ENCODE measurements at regions of chrX and their contacts with region 1.

Region 1: DNA sequence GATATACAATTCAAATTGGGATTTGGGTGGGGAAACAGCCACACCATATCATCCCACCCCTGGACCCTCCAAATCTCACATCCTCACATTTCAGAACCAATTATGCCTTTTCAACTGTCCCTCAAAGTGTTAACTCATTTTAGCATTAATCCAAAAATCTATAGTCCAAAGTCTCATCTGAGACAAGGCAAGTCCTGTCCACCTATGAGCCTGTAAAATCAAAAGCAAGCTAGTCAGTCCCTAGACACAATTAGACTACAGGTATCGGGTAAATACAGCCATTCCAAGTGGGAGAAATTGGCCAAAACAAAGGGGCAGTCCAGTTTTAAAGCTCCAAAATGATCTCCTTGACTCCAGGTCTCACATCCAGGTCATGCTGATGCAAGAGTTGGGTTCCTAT is 128.0 kb downstream of the NBDY start:
- DNase-seq: no peak
- ATAC-seq: no peak
- H3K4me3 ChIP-seq: no peak overlapping the region
- H3K4me3 Mint-ChIP-seq: no peak overlapping the region
- H3K27ac ChIP-seq: no peak overlapping the region
- H3K27ac Mint-ChIP-seq: no peak overlapping the region
- H3K4me1 ChIP-seq: no peaks in the 10 kb centered on the region
- H3K4me1 Mint-ChIP-seq: no peaks in the 10 kb centered on the region
- H3K27me3 ChIP-seq: no peaks in the 10 kb centered on the region
- H3K27me3 Mint-ChIP-seq: peaks cover 0 to 31% of the 10 kb centered on the region in 2 donors

Region 2: GRCh38 chrX:57977992-57978391 is 1121.0 kb after region 1 on chrX:
- CTCF ChIA-PET with region 1: interaction called in 1 of 2 experiments, 10 read pairs
- POLR2A ChIA-PET with region 1: no interaction called
- DNase-seq: no peak
- ATAC-seq: no peak
- H3K4me3 ChIP-seq: no peak overlapping the region
- H3K4me3 Mint-ChIP-seq: no peak overlapping the region
- H3K27ac ChIP-seq: no peak overlapping the region
- H3K27ac Mint-ChIP-seq: no peak overlapping the region
- H3K4me1 ChIP-seq: no peaks in the 10 kb centered on the region
- H3K4me1 Mint-ChIP-seq: no peaks in the 10 kb centered on the region
- H3K27me3 ChIP-seq: no peaks in the 10 kb centered on the region
- H3K27me3 Mint-ChIP-seq: peaks cover 2 to 27% of the 10 kb centered on the region in 2 donors